K562 (cell line): ENCODE measurements at regions of chr19 and their contacts with region 1.

Region 1: DNA sequence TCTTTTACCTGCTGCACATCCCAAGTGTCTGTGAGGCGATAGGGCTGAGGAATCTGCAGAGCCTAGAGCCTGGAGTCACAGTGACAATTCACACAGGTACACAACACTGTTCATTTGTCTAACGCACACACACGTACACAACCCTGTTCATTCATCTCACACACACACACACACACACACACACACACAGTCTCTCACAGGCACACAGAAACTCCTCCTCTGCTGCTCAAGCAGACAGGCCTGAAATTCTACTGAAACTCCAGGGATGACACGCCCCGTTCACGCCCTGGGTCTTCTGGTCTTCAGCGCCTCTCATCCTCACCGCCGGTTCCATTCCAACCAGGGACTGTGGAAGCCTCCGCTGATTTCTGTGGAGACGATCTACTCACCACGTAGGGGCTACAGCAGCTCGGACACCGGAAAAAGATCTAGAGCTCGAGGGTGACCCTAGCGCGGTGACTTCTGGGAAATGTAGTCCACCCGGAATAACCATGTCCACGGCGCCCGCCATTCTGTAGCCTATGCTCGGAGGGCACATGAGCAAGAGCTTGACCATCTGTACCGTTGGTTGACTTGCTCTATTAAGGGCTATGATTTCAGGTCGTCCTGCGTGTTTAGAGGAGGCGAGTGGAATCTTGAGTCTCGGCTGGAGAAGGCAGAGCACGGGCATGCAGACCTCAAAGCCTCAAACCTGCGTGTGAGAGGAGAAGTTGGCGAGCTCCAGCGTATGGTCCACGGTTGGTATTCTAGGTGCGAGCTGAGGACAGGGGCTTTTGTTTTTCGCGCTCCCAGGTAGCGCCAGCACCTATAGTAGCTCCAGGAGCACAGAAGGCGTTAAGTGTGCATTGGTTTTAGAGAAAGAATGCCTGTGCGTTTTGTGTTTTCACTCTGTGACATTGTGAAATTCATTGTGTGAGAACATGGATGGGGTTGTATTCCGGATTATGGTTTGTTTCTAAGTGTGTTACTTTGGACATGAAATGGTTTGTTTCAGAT is 33.4 kb downstream of the ZNF45 start:
- DNase-seq: peak; percentile 67 to 87 (median 78)
- ATAC-seq: peak; percentile 100
- H3K4me3 ChIP-seq: peak overlapping the region; percentile 46
- H3K27ac ChIP-seq: no peak overlapping the region; the same call in 2 of the 3 replicates
- H3K4me1 ChIP-seq: no peaks in the 10 kb centered on the region; a peak in 2 of 5 replicates
- H3K27me3 ChIP-seq: no peaks in the 10 kb centered on the region
- CTCF ChIP-seq: no peak
- EP300 ChIP-seq: no peak
- POLR2A ChIP-seq: 0 out of 2 replicates have a peak, but pooled peaks have one; percentile 42
- RAD21 ChIP-seq: no peak

Region 2: GRCh38 chr19:43743022-43743421 is 158.7 kb before region 1 on chr19:
- CTCF ChIA-PET with region 1: no interaction called
- POLR2A ChIA-PET with region 1: no interaction called
- in situ Hi-C with region 1: no loop called
- intact Hi-C with region 1: no loop called
- DNase-seq: no peak
- ATAC-seq: no peak
- H3K4me3 ChIP-seq: no peak overlapping the region
- H3K27ac ChIP-seq: no peak overlapping the region
- H3K4me1 ChIP-seq: no peaks in the 10 kb centered on the region; a peak in 1 of 5 replicates
- H3K27me3 ChIP-seq: no peaks in the 10 kb centered on the region
- CTCF ChIP-seq: no peak
- EP300 ChIP-seq: no peak
- POLR2A ChIP-seq: no peak
- RAD21 ChIP-seq: no peak

Region 3: GRCh38 chr19:43847884-43848283 is 53.8 kb before region 1 on chr19:
- CTCF ChIA-PET with region 1: no interaction called
- POLR2A ChIA-PET with region 1: no interaction called
- in situ Hi-C with region 1: loop called (anchors 5 kb)
- intact Hi-C with region 1: no loop called
- DNase-seq: no peak
- ATAC-seq: no peak
- H3K4me3 ChIP-seq: no peak overlapping the region
- H3K27ac ChIP-seq: no peak overlapping the region
- H3K4me1 ChIP-seq: no peaks in the 10 kb centered on the region
- H3K27me3 ChIP-seq: no peaks in the 10 kb centered on the region
- CTCF ChIP-seq: no peak
- EP300 ChIP-seq: no peak
- POLR2A ChIP-seq: no peak
- RAD21 ChIP-seq: no peak

Region 4: DNA sequence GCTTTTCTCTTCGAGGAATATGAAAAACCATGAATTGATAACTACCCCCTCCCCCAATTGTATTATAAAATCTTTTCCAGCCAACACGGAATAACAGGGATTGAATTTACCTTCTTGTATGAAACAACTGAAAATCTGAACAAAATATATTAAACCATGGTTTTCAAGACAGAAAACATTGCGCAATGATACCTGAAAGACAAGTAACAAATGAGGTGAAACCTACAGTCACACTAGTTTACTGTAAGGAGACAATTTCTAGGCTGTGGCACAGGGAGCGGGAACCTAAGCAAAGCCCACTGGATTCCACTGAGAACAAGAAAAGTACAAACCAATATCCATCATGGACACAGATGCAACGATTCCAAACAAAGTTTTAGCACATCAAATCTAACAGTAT is 21.2 kb before region 1 on chr19:
- CTCF ChIA-PET with region 1: no interaction called
- POLR2A ChIA-PET with region 1: no interaction called
- in situ Hi-C with region 1: no loop called
- intact Hi-C with region 1: no loop called
- DNase-seq: no peak
- ATAC-seq: no peak
- H3K4me3 ChIP-seq: no peak overlapping the region
- H3K27ac ChIP-seq: no peak overlapping the region
- H3K4me1 ChIP-seq: no peaks in the 10 kb centered on the region
- H3K27me3 ChIP-seq: no peaks in the 10 kb centered on the region
- CTCF ChIP-seq: no peak
- EP300 ChIP-seq: no peak
- POLR2A ChIP-seq: no peak
- RAD21 ChIP-seq: no peak